Activated T-helper 2 cell treated with anti-CD3 and anti-CD28 coated beads, Interferon-gamma antibody, Interleukin-2, Interleukin-4, amounts not matched to agents 10 μg/mL and 5 μg/mL and 100 μg/mL, durations not matched to agents 14 hours and 24 hours and 36 hours (primary cell): ENCODE measurements at regions of chr14 and their contacts with region 1.

Region 1: GRCh38 chr14:104650057-104650981 is 39.1 kb upstream of the INF2 start:
- DNase-seq: peak; percentile 50
- H3K4me3 Mint-ChIP-seq: no peak overlapping the region
- H3K27ac Mint-ChIP-seq: no peak overlapping the region
- H3K4me1 Mint-ChIP-seq: no peaks in the 10 kb centered on the region
- H3K27me3 Mint-ChIP-seq: peaks cover 16% of the 10 kb centered on the region

Region 2: GRCh38 chr14:104665657-104666522 is 15.6 kb after region 1 on chr14:
- intact Hi-C with region 1: no loop called
- DNase-seq: no peak
- H3K4me3 Mint-ChIP-seq: no peak overlapping the region
- H3K27ac Mint-ChIP-seq: no peak overlapping the region
- H3K4me1 Mint-ChIP-seq: peaks cover 11% of the 10 kb centered on the region
- H3K27me3 Mint-ChIP-seq: peaks cover 15% of the 10 kb centered on the region

Region 3: GRCh38 chr14:104708606-104709268 is 58.4 kb after region 1 on chr14:
- intact Hi-C with region 1: loop called (anchors 1 kb)
- DNase-seq: peak; percentile 68
- H3K4me3 Mint-ChIP-seq: no peak overlapping the region
- H3K27ac Mint-ChIP-seq: no peak overlapping the region
- H3K4me1 Mint-ChIP-seq: no peaks in the 10 kb centered on the region
- H3K27me3 Mint-ChIP-seq: no peaks in the 10 kb centered on the region

Region 4: GRCh38 chr14:104749111-104749649 is 98.9 kb after region 1 on chr14:
- intact Hi-C with region 1: no loop called
- DNase-seq: no peak
- H3K4me3 Mint-ChIP-seq: no peak overlapping the region
- H3K27ac Mint-ChIP-seq: no peak overlapping the region
- H3K4me1 Mint-ChIP-seq: peaks cover 12% of the 10 kb centered on the region
- H3K27me3 Mint-ChIP-seq: no peaks in the 10 kb centered on the region